Vagina (tissue), 2 donors: ENCODE measurements at regions of chr14 and their contacts with region 1.

Region 1: DNA sequence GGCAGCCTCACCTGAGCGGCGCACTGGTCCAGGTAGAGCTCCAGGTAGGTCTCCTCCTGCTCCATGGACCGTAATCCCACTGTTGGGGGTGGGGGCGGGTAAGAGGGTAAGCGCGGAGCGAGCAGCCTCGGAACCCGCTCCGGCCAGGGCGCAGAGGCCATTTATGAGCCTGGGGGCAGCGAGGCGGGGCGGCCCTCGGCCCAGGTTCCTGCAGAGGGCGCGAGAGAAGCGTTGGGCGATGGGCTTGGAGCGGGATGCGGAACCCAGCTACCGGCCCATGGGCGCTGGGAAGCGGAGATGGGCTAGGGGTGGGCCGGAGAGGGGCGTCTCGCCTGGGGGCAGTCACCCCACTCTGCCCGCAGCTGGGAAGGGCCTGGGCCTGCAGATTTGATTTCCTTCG is at the start of gene TBPL2:
- DNase-seq: peak in 1 of 2 donors; percentile 54
- H3K4me3 ChIP-seq: no peak within 1 kb of the TSS
- H3K27ac ChIP-seq: no peak within 1 kb of the TSS
- H3K4me1 ChIP-seq: no peaks in the 10 kb centered on the region
- H3K27me3 ChIP-seq: no peaks in the 10 kb centered on the region
- CTCF ChIP-seq: no peak
- POLR2A ChIP-seq: no peak
- total RNA-seq, gene TBPL2: not detected

Region 2: DNA sequence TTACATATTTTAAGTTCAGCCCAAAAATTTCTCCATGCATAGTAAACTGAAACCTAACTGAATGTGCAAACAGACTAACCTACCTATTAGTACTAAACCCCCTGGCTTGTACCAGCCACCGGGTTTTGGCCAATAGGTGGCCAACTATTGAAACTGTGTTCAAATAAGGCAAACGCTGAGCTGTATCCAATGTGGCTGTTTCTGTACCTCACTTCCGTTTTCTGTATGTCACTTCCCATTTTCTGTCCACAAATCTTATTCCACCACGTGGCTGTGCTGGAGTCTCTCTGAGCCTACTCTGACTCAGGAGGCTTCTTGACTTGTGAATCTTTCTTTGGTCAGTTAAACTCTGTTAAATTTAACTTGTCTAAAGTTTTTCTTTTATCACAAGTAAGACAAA is 175.2 kb before region 1 on chr14:
- intact Hi-C with region 1: no loop called
- DNase-seq: no peak
- H3K4me3 ChIP-seq: no peak overlapping the region
- H3K27ac ChIP-seq: no peak overlapping the region
- H3K4me1 ChIP-seq: no peaks in the 10 kb centered on the region
- H3K27me3 ChIP-seq: no peaks in the 10 kb centered on the region
- CTCF ChIP-seq: no peak
- POLR2A ChIP-seq: no peak

Region 3: DNA sequence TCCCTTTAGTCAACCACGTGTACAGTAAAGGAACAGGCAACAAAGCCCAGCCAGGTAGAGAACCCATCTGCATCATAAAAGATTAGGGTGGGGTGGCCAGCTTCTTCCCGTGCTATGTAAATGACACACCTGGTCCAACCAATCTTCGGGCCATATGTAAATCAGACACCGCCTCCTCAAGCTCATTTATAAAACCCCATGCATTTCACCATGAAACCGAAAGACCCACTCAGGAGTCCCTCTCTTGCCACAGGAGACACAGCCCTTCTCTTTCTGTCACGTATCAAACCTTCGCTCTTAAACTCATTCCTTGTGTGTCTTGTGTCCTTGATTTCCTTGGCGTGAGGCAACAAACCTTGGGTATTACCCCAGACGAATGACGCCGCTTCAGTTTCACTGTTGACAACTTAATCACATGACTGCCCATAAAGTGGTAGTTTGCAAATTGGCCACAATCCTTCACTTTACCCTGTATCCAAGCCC is 59.9 kb after region 1 on chr14:
- intact Hi-C with region 1: no loop called
- DNase-seq: no peak
- H3K4me3 ChIP-seq: no peak overlapping the region
- H3K27ac ChIP-seq: no peak overlapping the region
- H3K4me1 ChIP-seq: no peaks in the 10 kb centered on the region
- H3K27me3 ChIP-seq: no peaks in the 10 kb centered on the region
- CTCF ChIP-seq: no peak
- POLR2A ChIP-seq: no peak

Region 4: DNA sequence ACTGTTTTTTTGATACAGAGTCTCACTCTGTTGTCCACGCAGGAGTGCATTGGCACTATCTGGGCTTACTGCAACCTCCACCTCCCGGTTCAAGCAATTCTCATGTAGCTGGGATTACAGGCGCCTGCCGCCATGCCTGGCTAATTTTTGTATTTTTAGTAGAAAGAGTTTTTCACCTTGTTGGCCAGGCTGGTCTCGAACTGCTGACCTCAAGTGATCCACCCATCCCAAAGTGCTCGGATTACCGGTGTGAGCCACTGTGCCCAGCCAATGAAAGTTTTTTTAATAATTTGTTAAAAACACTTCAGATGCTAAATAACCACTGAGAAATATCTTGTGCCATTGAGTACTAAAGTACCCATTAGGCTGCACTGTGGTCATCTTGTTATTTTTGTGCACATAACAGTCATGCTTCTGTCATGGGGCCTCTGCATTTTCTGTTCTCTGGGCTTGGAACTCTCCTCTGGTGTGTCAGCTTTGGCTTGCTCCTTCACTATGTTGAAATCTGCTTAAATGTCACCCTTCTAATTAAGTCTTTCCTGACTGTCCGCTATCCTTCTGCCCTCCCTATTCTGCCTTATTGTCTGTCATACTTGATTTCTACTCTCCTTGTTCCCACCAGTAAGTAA is 244.7 kb after region 1 on chr14:
- intact Hi-C with region 1: no loop called
- DNase-seq: no peak
- H3K4me3 ChIP-seq: no peak overlapping the region
- H3K27ac ChIP-seq: no peak overlapping the region
- H3K4me1 ChIP-seq: no peaks in the 10 kb centered on the region
- H3K27me3 ChIP-seq: no peaks in the 10 kb centered on the region
- CTCF ChIP-seq: no peak
- POLR2A ChIP-seq: no peak

Region 5: DNA sequence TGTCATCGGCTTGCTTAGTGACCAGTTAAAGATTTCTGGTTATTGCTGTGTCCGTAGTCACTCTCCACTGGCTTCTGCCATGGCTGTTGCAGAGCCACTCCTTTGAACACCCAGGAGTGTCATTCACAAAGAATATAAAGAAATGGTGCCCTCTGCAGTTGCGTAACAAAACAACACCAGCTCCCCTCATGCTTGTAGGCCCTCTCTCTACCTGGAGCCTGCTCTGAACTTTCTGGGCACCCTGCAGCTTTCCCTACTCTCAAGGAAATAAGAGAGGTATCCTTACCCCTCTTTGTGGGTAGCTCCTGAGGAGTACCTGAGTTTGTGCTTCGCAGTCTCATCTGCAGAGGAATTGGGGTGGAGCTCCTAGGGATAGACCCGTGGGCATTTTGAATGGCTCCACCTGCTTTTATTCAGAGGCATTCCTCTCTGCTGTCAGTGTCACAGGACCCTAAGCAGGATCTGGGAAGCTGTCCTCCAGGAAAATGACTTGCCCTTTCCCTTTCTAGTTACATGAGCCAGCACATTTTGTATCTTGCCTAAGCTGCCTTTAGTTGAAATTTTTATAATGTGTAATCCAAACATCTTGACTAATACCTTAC is 1042.0 kb after region 1 on chr14:
- intact Hi-C with region 1: loop called (anchors 5 kb)
- DNase-seq: no peak
- H3K4me3 ChIP-seq: no peak overlapping the region
- H3K27ac ChIP-seq: no peak overlapping the region
- H3K4me1 ChIP-seq: no peaks in the 10 kb centered on the region
- H3K27me3 ChIP-seq: no peaks in the 10 kb centered on the region
- CTCF ChIP-seq: no peak
- POLR2A ChIP-seq: no peak